Caco-2 (cell line): ENCODE measurements at regions of chr12 and their contacts with region 1.

Region 1: DNA sequence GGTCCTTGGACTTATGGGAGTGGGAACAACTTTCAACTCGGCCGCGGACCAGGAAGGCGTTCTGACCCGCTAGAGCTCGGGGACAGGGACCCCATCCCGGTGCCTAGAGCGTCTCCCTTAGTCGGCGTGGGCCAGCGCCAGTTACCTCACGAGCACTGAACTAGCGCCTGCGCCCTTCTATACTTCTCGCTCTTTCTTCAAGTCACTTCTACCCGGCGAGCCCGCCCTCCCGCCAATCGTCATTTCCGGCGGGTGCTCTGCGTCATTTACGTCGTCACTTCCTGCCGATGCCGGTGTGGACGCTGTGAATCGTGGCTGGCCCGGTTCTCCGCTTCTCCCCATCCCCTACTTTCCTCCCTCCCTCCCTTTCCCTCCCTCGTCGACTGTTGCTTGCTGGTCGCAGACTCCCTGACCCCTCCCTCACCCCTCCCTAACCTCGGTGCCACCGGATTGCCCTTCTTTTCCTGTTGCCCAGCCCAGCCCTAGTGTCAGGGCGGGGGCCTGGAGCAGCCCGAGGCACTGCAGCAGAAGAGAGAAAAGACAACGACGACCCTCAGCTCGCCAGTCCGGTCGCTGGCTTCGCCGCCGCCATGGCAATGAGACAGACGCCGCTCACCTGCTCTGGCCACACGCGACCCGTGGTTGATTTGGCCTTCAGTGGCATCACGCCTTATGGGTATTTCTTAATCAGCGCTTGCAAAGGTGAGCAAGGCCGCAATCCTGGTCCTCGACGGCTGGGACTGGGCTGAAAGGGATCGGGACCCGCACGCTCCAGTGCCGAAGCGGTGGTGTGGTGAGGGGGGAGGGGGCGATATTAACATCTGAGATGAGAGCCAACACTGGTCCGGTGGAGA is at the start of gene STRAP:
- DNase-seq: peak; percentile 98
- H3K4me3 ChIP-seq: peak within 1 kb of the TSS; percentile 68
- H3K4me3 Mint-ChIP-seq: peak within 1 kb of the TSS; percentile 82
- H3K27ac Mint-ChIP-seq: peak within 1 kb of the TSS; percentile 98
- H3K4me1 ChIP-seq: peaks cover 16% of the 10 kb centered on the region
- H3K4me1 Mint-ChIP-seq: peaks cover 33% of the 10 kb centered on the region
- H3K27me3 ChIP-seq: no peaks in the 10 kb centered on the region
- H3K27me3 Mint-ChIP-seq: no peaks in the 10 kb centered on the region
- CTCF ChIP-seq: no peak
- total RNA-seq, gene STRAP: 246 and 262 TPM in 2 replicates

Region 2: GRCh38 chr12:14803011-14803829 is 1079.1 kb before region 1 on chr12 and contains the starts of genes C12orf60 and WBP11:
- CTCF ChIA-PET with region 1: no interaction called
- POLR2A ChIA-PET with region 1: no interaction called
- intact Hi-C with region 1: loop called (anchors 1 kb)
- DNase-seq: peak; percentile 96 to 99
- H3K4me3 ChIP-seq: peak within 1 kb of the TSS; percentile 86
- H3K4me3 Mint-ChIP-seq: no peak within 1 kb of the TSS
- H3K27ac Mint-ChIP-seq: no peak within 1 kb of the TSS
- H3K4me1 ChIP-seq: peaks cover 12% of the 10 kb centered on the region; the same call in 1 of the 2 replicates
- H3K4me1 Mint-ChIP-seq: peaks cover 16% of the 10 kb centered on the region
- H3K27me3 ChIP-seq: no peaks in the 10 kb centered on the region
- H3K27me3 Mint-ChIP-seq: no peaks in the 10 kb centered on the region
- CTCF ChIP-seq: no peak
- total RNA-seq, gene C12orf60: 1.8 and 2.8 TPM in 2 replicates
- total RNA-seq, gene WBP11: 159 and 184 TPM in 2 replicates

Region 3: DNA sequence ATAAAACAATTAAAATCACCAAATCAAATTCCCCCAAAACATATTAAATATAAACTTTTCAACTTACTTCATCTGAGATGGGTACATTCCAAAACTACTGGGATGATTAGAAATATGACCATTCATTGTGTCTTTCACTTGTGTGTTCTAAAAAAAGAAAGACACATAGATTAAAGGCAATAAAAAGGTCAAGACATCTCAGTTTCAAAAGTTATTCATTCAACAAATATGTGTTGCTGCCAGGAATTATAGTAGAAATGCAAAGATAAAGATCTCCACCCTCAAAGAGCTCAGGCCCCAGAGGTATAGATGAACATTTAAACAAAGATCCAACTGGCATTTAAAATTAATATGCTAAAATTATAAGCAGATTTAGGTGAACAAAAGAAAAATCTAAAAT is 199.5 kb before region 1 on chr12:
- CTCF ChIA-PET with region 1: no interaction called
- POLR2A ChIA-PET with region 1: interaction called, 10 read pairs
- intact Hi-C with region 1: no loop called
- DNase-seq: no peak
- H3K4me3 ChIP-seq: no peak overlapping the region
- H3K4me3 Mint-ChIP-seq: no peak overlapping the region
- H3K27ac Mint-ChIP-seq: no peak overlapping the region
- H3K4me1 ChIP-seq: peaks cover 22% of the 10 kb centered on the region
- H3K4me1 Mint-ChIP-seq: peaks cover 18% of the 10 kb centered on the region
- H3K27me3 ChIP-seq: no peaks in the 10 kb centered on the region
- H3K27me3 Mint-ChIP-seq: no peaks in the 10 kb centered on the region
- CTCF ChIP-seq: no peak

Region 4: GRCh38 chr12:15741082-15741481 is 141.3 kb before region 1 on chr12:
- CTCF ChIA-PET with region 1: no interaction called
- POLR2A ChIA-PET with region 1: no interaction called
- intact Hi-C with region 1: no loop called
- DNase-seq: no peak
- H3K4me3 ChIP-seq: no peak overlapping the region
- H3K4me3 Mint-ChIP-seq: no peak overlapping the region
- H3K27ac Mint-ChIP-seq: no peak overlapping the region
- H3K4me1 ChIP-seq: 0 out of 2 replicates have a peak, but pooled peaks cover 4% of the 10 kb centered on the region
- H3K4me1 Mint-ChIP-seq: no peaks in the 10 kb centered on the region
- H3K27me3 ChIP-seq: no peaks in the 10 kb centered on the region
- H3K27me3 Mint-ChIP-seq: no peaks in the 10 kb centered on the region
- CTCF ChIP-seq: no peak

Region 5: DNA sequence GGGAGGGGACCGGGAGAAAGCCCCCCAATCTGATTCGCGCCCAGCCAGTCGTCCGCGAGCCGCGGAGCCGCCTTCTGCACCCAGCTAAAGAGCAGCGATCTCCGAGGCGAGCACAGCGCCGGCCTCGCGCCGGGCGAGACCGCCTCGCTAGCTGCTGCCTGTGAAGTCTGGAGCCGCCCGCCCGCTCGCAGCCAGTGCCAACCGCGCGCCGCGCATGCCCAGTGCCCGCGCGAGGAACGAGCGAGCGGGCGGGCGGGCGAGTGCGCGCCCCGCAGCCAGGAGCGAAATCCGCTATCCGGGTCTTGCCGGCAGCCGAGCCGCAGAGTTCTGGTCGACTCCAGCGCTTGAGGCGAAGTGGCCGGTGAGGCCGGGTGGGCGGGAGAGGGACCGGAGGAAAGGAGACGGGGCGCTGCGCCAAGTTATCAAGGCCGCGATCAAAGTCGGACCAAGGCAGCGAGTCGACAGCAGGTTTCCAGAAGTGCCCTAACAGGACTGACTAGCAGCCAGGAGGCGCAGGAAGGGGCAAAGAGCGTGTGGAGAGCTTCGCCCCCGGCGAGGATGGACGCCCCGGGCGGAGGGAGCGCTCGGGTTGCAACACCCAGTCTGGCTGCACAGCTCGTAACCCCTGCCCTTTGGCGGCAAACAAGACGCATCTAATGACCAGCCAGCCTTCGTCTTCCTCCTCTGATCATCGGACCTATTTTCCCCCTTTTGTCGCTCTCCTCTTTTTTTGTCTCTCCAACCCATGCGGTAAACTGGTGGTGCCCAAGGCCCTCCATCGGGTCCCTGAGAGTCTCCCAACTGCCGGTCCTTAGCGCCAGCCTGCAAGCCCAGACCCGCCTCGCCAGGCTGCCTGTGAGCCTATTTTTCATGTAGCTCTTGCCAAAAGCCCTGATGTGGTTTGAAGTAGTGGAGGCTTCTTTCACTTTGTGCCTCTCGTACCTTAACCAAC is 92.8 kb before region 1 on chr12 and contains the start of gene EPS8:
- CTCF ChIA-PET with region 1: no interaction called
- POLR2A ChIA-PET with region 1: no interaction called
- intact Hi-C with region 1: loop called (anchors 1 kb)
- DNase-seq: peak; percentile 91 to 97
- H3K4me3 ChIP-seq: peak within 1 kb of the TSS; percentile 76
- H3K4me3 Mint-ChIP-seq: peak within 1 kb of the TSS; percentile 75
- H3K27ac Mint-ChIP-seq: peak within 1 kb of the TSS; percentile 62
- H3K4me1 ChIP-seq: 0 out of 2 replicates have a peak, but pooled peaks cover 3% of the 10 kb centered on the region
- H3K4me1 Mint-ChIP-seq: peaks cover 5% of the 10 kb centered on the region
- H3K27me3 ChIP-seq: peaks cover 1% of the 10 kb centered on the region; the same call in 1 of the 2 replicates
- H3K27me3 Mint-ChIP-seq: peaks cover 13% of the 10 kb centered on the region
- CTCF ChIP-seq: no peak
- total RNA-seq, gene EPS8: 13.9 and 20.1 TPM in 2 replicates

Region 6: GRCh38 chr12:15842108-15842507 is 40.2 kb before region 1 on chr12:
- CTCF ChIA-PET with region 1: no interaction called
- POLR2A ChIA-PET with region 1: no interaction called
- intact Hi-C with region 1: no loop called
- DNase-seq: no peak
- H3K4me3 ChIP-seq: no peak overlapping the region
- H3K4me3 Mint-ChIP-seq: no peak overlapping the region
- H3K27ac Mint-ChIP-seq: no peak overlapping the region
- H3K4me1 ChIP-seq: no peaks in the 10 kb centered on the region
- H3K4me1 Mint-ChIP-seq: no peaks in the 10 kb centered on the region
- H3K27me3 ChIP-seq: no peaks in the 10 kb centered on the region
- H3K27me3 Mint-ChIP-seq: peaks cover 9% of the 10 kb centered on the region
- CTCF ChIP-seq: no peak

Region 7: DNA sequence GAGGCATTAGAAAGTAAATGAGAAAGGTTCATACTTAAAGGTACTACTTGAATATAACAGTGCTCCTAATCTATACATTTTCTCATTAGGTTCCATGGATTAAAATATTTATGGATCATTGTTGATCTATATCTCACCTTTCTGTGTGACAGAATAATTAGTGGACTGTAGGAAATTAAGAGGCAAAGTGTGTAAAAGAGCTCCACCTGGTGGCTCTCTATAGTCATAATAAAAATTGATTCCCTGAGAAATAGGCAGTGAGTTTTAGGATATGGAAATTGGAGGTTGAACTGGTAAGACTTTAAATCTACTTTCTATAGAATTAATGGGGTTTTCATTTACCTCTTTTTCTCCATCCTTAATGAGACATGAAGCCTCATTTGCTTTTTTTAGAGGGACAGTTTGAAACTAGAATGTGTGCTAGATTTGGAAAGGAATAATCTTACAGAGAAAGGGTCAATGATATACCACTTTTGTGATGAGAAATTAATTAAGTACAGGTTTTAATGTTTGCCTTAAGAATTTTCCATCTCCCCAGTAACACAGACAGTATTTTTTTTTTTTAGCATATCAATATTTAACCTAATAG is 17.0 kb after region 1 on chr12:
- CTCF ChIA-PET with region 1: interaction called, 6 read pairs
- POLR2A ChIA-PET with region 1: interaction called, 6 read pairs
- intact Hi-C with region 1: loop called (anchors 1 kb)
- DNase-seq: peak in 1 of 2 experiments; percentile 38
- H3K4me3 ChIP-seq: no peak overlapping the region
- H3K4me3 Mint-ChIP-seq: no peak overlapping the region
- H3K27ac Mint-ChIP-seq: no peak overlapping the region
- H3K4me1 ChIP-seq: no peaks in the 10 kb centered on the region
- H3K4me1 Mint-ChIP-seq: no peaks in the 10 kb centered on the region
- H3K27me3 ChIP-seq: no peaks in the 10 kb centered on the region
- H3K27me3 Mint-ChIP-seq: no peaks in the 10 kb centered on the region
- CTCF ChIP-seq: peak; percentile 70 to 88

Region 8: GRCh38 chr12:15910864-15911721 is 28.7 kb after region 1 on chr12 and contains the start of gene DERA:
- CTCF ChIA-PET with region 1: no interaction called
- POLR2A ChIA-PET with region 1: interaction called, 4 read pairs
- intact Hi-C with region 1: loop called (anchors 1 kb)
- DNase-seq: peak; percentile 91 to 94
- H3K4me3 ChIP-seq: peak within 1 kb of the TSS; percentile 87
- H3K4me3 Mint-ChIP-seq: peak within 1 kb of the TSS; percentile 88
- H3K27ac Mint-ChIP-seq: peak within 1 kb of the TSS; percentile 93
- H3K4me1 ChIP-seq: peaks cover 22% of the 10 kb centered on the region
- H3K4me1 Mint-ChIP-seq: no peaks in the 10 kb centered on the region
- H3K27me3 ChIP-seq: no peaks in the 10 kb centered on the region
- H3K27me3 Mint-ChIP-seq: no peaks in the 10 kb centered on the region
- CTCF ChIP-seq: no peak
- total RNA-seq, gene DERA: 84.3 and 86.4 TPM in 2 replicates

Region 9: DNA sequence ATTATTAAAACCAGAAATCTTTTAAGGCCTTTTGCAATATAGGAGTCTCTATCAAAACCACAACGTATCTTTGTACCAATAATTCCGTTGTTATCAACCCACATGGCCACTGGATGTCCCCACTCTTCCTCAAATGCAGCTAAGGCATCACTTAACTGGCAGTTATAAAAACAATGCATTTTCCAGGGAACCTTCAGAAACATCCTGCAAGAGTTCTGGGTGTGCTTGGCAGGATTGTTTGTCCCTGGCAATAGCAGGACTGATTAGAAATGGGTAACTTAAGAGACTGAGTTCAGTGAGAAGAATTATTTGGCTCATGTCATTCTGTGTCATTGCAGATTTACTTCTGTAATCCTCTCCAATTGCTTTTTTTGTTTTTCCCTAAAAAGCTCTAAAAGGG is 283.2 kb after region 1 on chr12:
- CTCF ChIA-PET with region 1: no interaction called
- POLR2A ChIA-PET with region 1: no interaction called
- intact Hi-C with region 1: no loop called
- DNase-seq: peak; percentile 54 to 58
- H3K4me3 ChIP-seq: no peak overlapping the region
- H3K4me3 Mint-ChIP-seq: no peak overlapping the region
- H3K27ac Mint-ChIP-seq: no peak overlapping the region
- H3K4me1 ChIP-seq: no peaks in the 10 kb centered on the region
- H3K4me1 Mint-ChIP-seq: no peaks in the 10 kb centered on the region
- H3K27me3 ChIP-seq: no peaks in the 10 kb centered on the region
- H3K27me3 Mint-ChIP-seq: peaks cover 12% of the 10 kb centered on the region
- CTCF ChIP-seq: peak; percentile 65 to 83